WTC11 (cell line): ENCODE measurements at regions of chr1 and their contacts with region 1.

Region 1: GRCh38 chr1:117710710-117711109 is 104.9 kb downstream of the TENT5C start:
- DNase-seq: peak; percentile 48
- ATAC-seq: peak; percentile 55
- H3K4me3 Mint-ChIP-seq: no peak overlapping the region
- H3K27ac Mint-ChIP-seq: no peak overlapping the region
- H3K4me1 Mint-ChIP-seq: peaks cover 27% of the 10 kb centered on the region
- H3K27me3 Mint-ChIP-seq: peaks cover 7% of the 10 kb centered on the region
- CTCF ChIP-seq: peak; percentile 33; the same call in 1 of the 2 replicates

Region 2: DNA sequence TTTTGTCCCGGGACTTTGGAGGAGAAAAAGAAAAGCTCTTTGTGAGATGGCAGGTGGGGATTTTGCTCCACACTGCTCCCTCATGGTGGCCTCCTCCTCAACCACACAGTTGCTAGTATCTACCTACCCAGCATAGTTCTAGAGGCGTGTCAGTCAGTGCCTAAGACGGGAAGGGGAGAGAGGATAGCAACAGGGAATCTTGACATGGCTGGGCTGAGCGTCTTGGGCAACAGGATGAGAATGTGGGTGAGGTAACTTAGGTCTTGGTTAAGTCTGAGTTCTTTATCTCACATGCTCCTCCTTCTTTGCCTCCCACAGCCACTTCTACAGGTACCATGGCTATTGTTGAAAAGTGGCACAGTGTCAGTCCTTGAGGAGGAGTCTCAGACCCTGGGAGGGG is 29.6 kb before region 1 on chr1:
- CTCF ChIA-PET with region 1: interaction called, 12 read pairs
- POLR2A ChIA-PET with region 1: no interaction called
- DNase-seq: no peak
- ATAC-seq: peak; percentile 89
- H3K4me3 Mint-ChIP-seq: no peak overlapping the region
- H3K27ac Mint-ChIP-seq: no peak overlapping the region
- H3K4me1 Mint-ChIP-seq: peaks cover 7% of the 10 kb centered on the region; the same call in 1 of the 2 replicates
- H3K27me3 Mint-ChIP-seq: no peaks in the 10 kb centered on the region
- CTCF ChIP-seq: no peak